ENCODE measurements at regions of chr3 and their contacts with region 1.

Region 1: DNA sequence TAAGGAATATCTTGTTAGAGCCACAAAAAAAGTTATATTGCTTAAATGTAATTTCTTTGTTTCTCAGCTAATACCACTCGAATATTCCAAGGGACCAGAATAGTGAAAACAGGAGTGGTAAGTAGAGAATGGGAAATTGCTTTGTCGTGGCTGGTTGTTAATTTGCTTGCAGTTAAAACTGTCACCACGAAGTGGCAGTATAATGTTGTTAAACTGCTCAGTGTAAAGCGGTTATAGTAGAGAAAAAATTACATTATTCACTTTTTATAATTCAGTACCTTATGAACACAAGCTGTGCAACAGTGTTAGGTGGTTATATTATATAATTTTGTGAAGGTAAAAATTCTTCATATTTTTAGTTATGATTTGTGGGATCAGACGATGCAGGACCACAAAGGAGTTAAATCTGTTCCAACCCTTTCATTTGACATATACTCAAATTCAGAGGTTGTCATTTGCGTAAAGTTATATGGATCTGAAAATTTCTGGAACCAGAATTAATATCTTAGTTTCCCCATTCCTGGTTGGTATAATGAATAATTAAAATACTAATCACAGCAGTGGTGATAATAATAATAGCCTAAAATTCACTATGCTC is 171.8 kb downstream of the FEZF2 start:
- DNase-seq: peak; percentile 10
- H3K4me3 Mint-ChIP-seq: no peak overlapping the region
- H3K27ac Mint-ChIP-seq: no peak overlapping the region
- H3K4me1 Mint-ChIP-seq: no peaks in the 10 kb centered on the region
- H3K27me3 Mint-ChIP-seq: peaks cover 2% of the 10 kb centered on the region

Region 2: DNA sequence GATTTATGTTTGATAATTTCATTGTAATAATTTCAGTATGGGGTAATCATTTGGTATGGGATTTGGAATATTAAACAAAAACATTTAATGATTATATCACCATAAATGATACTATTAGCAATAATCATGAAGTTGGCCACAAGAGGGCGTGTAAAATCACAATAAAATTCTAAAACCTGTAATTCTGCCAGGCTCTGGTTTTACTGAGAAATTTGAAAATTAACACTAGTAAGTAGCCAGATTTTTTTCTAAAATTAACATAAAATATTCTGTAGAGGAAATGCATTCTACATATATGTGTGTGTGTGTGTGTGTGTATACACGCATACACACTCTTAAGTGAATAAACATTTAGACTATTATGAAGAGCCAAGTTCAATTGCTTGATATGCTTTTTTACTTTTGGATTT is 131.3 kb after region 1 on chr3:
- CTCF ChIA-PET with region 1: interaction called, 7 read pairs
- intact Hi-C with region 1: loop called (anchors 1 kb)
- DNase-seq: peak; percentile 6
- H3K4me3 Mint-ChIP-seq: no peak overlapping the region
- H3K27ac Mint-ChIP-seq: no peak overlapping the region
- H3K4me1 Mint-ChIP-seq: no peaks in the 10 kb centered on the region
- H3K27me3 Mint-ChIP-seq: peaks cover 3% of the 10 kb centered on the region

Region 3: DNA sequence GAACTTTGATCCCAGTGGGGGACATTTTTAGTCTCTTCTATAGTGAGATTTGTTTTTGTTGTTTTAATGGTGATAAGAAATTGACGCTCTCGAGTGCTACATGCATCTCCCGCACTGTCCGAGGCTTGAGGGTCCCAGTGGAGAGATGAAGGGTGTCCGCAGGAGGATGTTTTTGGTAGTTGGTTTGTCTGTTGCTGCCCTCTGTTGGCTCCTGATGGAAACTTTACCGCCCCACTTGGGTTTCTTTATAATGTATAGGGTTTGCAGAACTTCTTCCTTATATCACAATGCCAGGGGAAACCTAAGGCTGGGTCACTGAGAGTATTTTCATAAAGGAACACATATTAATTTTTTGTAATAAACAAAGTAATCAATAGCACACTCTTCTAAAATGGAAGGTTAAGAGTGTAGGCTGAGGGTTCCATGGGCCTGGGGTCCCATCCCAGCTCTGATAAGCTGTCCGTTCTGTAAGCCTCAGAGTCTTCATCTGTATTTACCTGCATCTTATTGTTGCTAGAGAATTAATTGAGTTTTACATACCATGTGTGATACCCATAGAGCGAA is 357.1 kb after region 1 on chr3:
- CTCF ChIA-PET with region 1: no interaction called
- intact Hi-C with region 1: loop called (anchors 1 kb)
- DNase-seq: peak; percentile 10
- H3K4me3 Mint-ChIP-seq: no peak overlapping the region
- H3K27ac Mint-ChIP-seq: no peak overlapping the region
- H3K4me1 Mint-ChIP-seq: no peaks in the 10 kb centered on the region
- H3K27me3 Mint-ChIP-seq: peaks cover 4% of the 10 kb centered on the region

Region 4: DNA sequence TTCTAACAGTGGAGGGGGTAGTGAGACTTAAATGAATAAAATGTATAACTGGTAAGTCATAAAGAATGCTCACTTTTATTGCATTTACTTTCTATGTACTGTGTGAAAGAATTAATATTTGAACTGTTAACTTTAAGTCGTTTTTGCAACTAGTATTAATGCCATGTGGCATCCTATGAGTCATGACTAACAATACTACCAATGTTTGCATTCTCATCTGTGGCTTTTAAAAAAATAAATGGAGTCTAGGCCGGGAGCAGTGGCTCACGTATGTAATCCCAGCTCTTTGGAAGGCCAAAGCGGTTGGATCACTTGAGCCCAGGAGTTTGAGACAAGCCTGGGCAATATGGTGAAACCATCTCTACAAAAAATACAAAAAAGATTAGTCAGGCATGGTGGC is 1622.8 kb after region 1 on chr3:
- CTCF ChIA-PET with region 1: interaction called, 3 read pairs
- intact Hi-C with region 1: loop called (anchors 5 kb)
- DNase-seq: no peak
- H3K4me3 Mint-ChIP-seq: no peak overlapping the region
- H3K27ac Mint-ChIP-seq: no peak overlapping the region
- H3K4me1 Mint-ChIP-seq: no peaks in the 10 kb centered on the region
- H3K27me3 Mint-ChIP-seq: no peaks in the 10 kb centered on the region